ENCODE measurements at regions of chr3 and their contacts with region 1.

Region 1: GRCh38 chr3:50260027-50260941 is 8.7 kb upstream of the SEMA3B start:
- DNase-seq: peak; percentile 94
- ATAC-seq: peak; percentile 42
- H3K4me3 Mint-ChIP-seq: peak overlapping the region; percentile 64
- H3K27ac Mint-ChIP-seq: no peak overlapping the region
- H3K4me1 Mint-ChIP-seq: peaks cover 31% of the 10 kb centered on the region
- H3K27me3 Mint-ChIP-seq: no peaks in the 10 kb centered on the region
- CTCF ChIP-seq: peak; percentile 98

Region 2: GRCh38 chr3:50177346-50177745 is 82.9 kb before region 1 on chr3:
- CTCF ChIA-PET with region 1: no interaction called
- POLR2A ChIA-PET with region 1: no interaction called
- DNase-seq: no peak
- ATAC-seq: no peak
- H3K4me3 Mint-ChIP-seq: no peak overlapping the region
- H3K27ac Mint-ChIP-seq: no peak overlapping the region
- H3K4me1 Mint-ChIP-seq: peaks cover 3% of the 10 kb centered on the region
- H3K27me3 Mint-ChIP-seq: no peaks in the 10 kb centered on the region
- CTCF ChIP-seq: no peak

Region 3: DNA sequence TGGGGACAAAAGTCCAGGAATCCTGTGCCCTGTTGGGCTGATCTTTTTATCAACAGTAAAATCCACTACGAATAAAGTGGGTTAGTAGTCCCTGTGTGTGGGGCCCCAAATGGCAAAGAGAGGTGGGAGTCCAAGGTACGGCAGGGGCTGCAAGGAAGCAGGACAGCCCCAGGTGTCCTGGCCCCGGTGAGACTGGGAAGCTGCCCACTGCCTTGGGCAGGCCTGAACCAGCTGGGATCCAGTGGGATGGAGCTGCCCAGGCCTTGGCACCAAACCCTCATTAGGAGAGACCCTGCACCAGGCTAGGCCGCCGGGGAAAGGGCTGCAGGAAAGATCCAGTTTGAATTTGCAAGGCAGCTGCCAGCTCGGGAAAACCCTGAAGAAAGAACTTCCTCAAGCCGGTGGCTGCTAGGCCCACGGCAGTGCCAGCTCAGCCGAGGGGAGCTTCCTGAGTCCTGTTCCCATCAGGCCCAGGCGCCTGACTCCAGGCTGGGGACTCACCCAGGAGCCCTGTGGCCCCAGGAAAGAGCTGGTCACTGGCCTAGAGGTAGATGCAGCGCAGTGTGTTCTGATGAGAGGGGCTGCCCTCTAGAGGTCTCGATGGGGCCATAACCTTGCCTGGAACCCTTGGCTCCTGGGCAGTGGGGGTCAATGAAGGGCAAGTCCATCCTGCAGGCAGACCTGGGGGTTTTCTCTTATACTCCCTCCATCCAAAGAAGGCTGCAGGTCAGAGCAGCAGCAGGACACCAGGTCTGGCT is 38.7 kb before region 1 on chr3:
- CTCF ChIA-PET with region 1: interaction called, 82 read pairs
- POLR2A ChIA-PET with region 1: interaction called, 13 read pairs
- DNase-seq: peak; percentile 78
- ATAC-seq: peak; percentile 84
- H3K4me3 Mint-ChIP-seq: no peak overlapping the region
- H3K27ac Mint-ChIP-seq: no peak overlapping the region; the same call in 1 of the 2 replicates
- H3K4me1 Mint-ChIP-seq: peaks cover 9% of the 10 kb centered on the region
- H3K27me3 Mint-ChIP-seq: peaks cover under 1% of the 10 kb centered on the region
- CTCF ChIP-seq: no peak; the same call in 1 of the 2 replicates

Region 4: DNA sequence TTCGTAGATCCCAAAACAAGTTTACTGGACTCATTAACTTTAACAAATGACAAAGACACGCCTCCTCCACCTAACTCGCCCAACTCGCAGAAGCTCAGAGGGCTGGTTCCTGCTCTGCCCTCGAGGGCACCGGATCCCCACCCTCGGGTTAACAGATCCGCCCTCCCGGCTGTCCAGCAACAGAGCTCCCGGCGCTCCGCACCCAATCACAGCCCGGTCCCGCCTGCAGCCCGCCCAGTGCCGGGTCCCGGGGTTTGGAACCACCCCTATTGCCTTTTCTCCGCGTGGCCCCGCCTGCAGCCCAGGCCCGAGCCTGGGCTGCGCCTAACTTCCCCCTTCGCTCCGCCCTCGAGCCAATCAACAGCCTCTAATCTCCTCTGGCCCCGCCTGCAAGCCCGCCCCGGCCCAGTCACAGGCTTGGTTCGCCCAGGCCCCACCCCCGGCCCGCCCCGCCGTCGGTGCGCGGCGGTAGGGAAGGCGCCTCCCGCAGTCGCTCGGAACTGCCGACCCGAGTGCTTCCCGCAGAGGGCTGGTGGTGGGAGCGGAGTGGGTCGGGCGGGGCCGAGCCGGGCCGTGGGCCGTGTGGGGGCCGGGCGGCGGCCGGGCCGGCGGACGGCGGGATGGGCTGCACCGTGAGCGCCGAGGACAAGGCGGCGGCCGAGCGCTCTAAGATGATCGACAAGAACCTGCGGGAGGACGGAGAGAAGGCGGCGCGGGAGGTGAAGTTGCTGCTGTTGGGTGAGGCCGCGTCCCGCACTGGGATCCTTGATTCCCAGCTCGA is 24.4 kb before region 1 on chr3 and contains the start of gene GNAI2:
- CTCF ChIA-PET with region 1: interaction called, 69 read pairs
- POLR2A ChIA-PET with region 1: interaction called, 9 read pairs
- DNase-seq: peak; percentile 99
- ATAC-seq: peak; percentile 94
- H3K4me3 Mint-ChIP-seq: peak within 1 kb of the TSS; percentile 97
- H3K27ac Mint-ChIP-seq: peak within 1 kb of the TSS; percentile 93
- H3K4me1 Mint-ChIP-seq: peaks cover 48% of the 10 kb centered on the region
- H3K27me3 Mint-ChIP-seq: no peaks in the 10 kb centered on the region
- CTCF ChIP-seq: no peak
- total RNA-seq, gene GNAI2: 181 to 185 TPM (median 185 TPM) in 3 replicates

Region 5: DNA sequence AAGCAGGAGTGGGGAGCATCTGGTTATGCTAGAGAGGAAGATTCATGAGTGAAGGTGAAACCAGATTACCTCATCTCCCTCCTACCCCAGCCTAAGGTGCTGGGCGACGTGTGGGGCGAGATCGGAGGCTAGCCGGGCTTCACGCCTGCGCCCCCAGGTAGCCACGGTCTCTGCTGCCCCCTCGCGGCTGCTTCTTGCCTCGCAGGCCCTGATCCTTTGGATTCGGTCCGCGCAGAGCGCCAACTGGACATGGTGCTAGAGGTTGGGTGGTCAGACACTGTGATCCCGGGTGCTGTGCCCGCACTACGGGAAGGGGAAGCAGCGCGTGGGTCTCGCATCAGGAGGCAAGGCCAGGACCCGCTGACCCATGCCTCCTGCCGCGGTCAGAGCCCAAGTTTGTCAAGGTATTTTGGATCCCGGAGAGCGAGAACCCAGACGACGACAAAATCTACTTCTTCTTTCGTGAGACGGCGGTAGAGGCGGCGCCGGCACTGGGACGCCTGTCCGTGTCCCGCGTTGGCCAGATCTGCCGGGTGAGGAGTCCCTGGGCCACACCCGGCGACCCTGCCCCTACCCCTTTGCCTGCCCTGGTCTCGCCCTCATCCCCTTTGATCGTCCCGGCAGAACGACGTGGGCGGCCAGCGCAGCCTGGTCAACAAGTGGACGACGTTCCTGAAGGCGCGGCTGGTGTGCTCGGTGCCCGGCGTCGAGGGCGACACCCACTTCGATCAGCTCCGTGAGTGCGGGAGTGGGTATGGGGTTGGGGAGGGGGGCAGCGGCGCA is 12.8 kb after region 1 on chr3:
- CTCF ChIA-PET with region 1: interaction called, 88 read pairs
- POLR2A ChIA-PET with region 1: interaction called, 5 read pairs
- DNase-seq: peak; percentile 94
- ATAC-seq: peak; percentile 37
- H3K4me3 Mint-ChIP-seq: peak overlapping the region; percentile 67
- H3K27ac Mint-ChIP-seq: no peak overlapping the region
- H3K4me1 Mint-ChIP-seq: peaks cover 38% of the 10 kb centered on the region
- H3K27me3 Mint-ChIP-seq: peaks cover 53% of the 10 kb centered on the region
- CTCF ChIP-seq: peak; percentile 97

Region 6: GRCh38 chr3:50298836-50299637 is 38.8 kb after region 1 on chr3 and contains the starts of genes HYAL3 and NAA80:
- CTCF ChIA-PET with region 1: interaction called, 10 read pairs
- POLR2A ChIA-PET with region 1: interaction called, 4 read pairs
- DNase-seq: peak; percentile 100
- ATAC-seq: peak; percentile 88
- H3K4me3 Mint-ChIP-seq: peak within 1 kb of the TSS; percentile 97
- H3K27ac Mint-ChIP-seq: peak within 1 kb of the TSS; percentile 98
- H3K4me1 Mint-ChIP-seq: peaks cover 22% of the 10 kb centered on the region
- H3K27me3 Mint-ChIP-seq: no peaks in the 10 kb centered on the region; the same call in 1 of the 2 replicates
- CTCF ChIP-seq: no peak; the same call in 1 of the 2 replicates
- total RNA-seq, gene HYAL3: 2.9 to 3.8 TPM (median 3.2 TPM) in 3 replicates
- total RNA-seq, gene NAA80: 13.7 to 17.3 TPM (median 13.7 TPM) in 3 replicates

Region 7: DNA sequence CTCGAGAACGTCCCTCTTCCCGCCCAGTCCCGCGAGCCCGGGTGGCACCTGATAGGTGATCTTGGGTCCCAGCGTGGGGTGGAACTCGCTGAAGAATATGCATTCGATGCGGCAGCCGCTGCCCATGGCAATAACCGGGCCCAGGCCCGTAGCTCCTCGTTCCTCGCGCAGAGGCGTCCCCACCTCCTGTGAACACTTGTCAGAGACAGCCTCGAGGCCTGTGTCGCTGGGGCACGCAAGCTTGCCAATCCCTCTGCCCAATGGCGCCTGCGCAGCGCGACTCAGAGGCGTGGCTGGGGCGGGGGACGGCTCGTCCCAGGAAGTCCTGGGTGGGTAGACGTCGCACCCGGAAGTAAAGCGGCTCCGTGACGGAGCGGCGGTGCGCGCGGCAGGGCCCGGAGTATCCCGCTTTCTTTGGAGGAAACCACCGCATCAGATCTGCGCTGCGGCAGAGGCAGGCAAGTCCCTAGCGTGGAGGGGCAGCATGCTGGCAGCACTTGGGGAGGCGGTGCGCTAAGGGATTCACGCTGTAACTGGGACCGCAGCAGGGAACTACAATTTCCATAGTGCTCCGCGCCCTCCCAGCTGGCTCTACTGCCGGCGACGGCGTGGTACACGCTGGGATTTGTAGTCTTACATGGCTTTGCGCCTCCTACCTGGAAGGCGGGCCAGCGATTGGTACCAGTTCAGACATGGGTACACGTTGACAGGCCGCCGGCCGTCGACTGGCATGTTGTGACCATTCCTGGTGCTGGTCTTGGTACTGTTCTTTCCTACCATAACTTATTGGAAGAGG is 90.4 kb after region 1 on chr3 and contains the starts of genes CYB561D2 and NPRL2:
- CTCF ChIA-PET with region 1: interaction called, 10 read pairs
- POLR2A ChIA-PET with region 1: no interaction called
- DNase-seq: peak; percentile 90
- ATAC-seq: peak; percentile 87
- H3K4me3 Mint-ChIP-seq: peak within 1 kb of the TSS; percentile 95
- H3K27ac Mint-ChIP-seq: peak within 1 kb of the TSS; percentile 93
- H3K4me1 Mint-ChIP-seq: peaks cover 18% of the 10 kb centered on the region
- H3K27me3 Mint-ChIP-seq: peaks cover 10% of the 10 kb centered on the region
- CTCF ChIP-seq: no peak
- total RNA-seq, gene CYB561D2: 9.8 to 12.0 TPM (median 11.3 TPM) in 3 replicates
- total RNA-seq, gene NPRL2: 20.6 to 26.6 TPM (median 23.9 TPM) in 3 replicates

Region 8: DNA sequence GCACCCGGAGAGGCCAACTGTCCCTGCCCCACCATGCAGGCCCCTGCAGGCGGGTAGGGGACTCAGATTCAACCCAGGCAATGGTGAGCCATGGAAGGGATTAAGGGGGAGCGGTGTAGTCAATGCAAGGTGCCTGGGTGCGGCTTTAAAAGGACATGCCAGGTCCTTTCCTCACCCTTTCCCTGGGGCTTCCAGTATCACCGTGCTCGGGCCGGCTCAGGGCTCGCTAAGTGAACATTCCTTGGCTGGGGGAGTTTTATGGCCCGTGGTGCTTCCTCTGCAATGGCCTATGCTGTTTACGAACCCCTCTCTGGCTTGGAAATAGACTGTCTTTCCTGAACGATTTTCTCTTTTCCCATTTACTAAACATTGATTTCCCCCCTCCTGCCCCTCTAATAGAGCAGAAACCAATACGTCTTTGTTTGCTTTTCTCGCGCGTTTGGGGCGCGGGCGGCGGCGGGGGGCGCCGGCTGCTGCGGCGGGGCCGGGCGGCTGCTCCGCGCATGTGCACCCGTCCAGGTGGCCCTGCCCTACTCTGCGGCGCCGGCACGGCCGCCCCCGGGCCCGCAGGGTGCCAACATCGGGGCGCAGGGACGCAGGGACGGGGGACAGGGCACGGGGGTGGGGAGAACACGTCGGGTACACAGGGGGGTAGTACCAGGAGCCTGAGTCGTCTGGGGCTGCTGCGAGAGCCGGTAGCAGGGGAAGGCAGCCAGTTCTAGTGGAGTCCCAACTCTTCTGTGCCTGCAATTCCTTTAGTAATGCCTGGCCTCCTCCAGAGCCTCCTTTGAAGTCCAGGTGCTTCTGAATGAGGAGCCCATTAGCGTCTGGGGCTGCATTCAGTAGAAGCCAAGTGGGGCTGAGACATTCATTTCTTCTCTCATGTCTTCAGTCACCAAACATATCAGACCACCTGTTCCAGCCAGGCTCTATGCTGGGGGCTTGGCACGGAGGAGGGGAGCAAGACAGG is 270.0 kb after region 1 on chr3:
- CTCF ChIA-PET with region 1: no interaction called
- POLR2A ChIA-PET with region 1: no interaction called
- DNase-seq: no peak
- ATAC-seq: peak; percentile 37
- H3K4me3 Mint-ChIP-seq: peak overlapping the region; percentile 42
- H3K27ac Mint-ChIP-seq: no peak overlapping the region
- H3K4me1 Mint-ChIP-seq: peaks cover 29% of the 10 kb centered on the region
- H3K27me3 Mint-ChIP-seq: peaks cover 28% of the 10 kb centered on the region
- CTCF ChIP-seq: no peak